Caco-2 (cell line): ENCODE measurements at regions of chr1 and their contacts with region 1.

Region 1: DNA sequence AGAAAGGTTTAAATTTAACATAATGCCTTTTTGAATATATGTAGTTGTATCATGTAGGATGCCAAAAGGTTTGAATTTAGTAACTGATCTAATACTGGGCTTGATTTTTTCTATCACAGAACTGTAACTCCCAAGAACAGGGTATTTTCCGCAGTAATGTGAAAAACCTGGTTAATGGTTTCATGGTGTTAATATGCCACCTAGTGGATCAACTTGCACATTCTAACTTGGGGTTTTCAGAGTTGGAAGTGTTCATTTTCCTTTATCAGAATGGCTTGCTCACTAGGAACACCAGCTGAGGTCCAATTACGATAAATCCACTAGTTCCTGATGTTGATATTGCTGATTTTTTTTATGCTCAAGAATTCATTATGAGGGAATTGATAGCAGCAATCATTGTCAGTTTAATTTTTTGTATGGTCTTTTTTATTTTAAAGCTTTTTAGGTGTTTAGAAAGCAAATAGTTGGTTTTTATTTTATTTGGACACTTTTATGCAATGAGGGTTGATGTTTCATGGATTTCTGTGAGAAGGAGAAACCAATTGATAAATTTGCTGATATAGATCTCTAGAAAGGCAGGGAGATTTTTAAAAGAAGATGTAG is 157.2 kb downstream of the PLA2G4A start:
- DNase-seq: peak in 1 of 2 experiments; percentile 53
- H3K4me3 ChIP-seq: no peak overlapping the region
- H3K4me3 Mint-ChIP-seq: no peak overlapping the region
- H3K27ac Mint-ChIP-seq: no peak overlapping the region
- H3K4me1 ChIP-seq: peaks cover 6% of the 10 kb centered on the region; the same call in 1 of the 2 replicates
- H3K4me1 Mint-ChIP-seq: no peaks in the 10 kb centered on the region
- H3K27me3 ChIP-seq: no peaks in the 10 kb centered on the region
- H3K27me3 Mint-ChIP-seq: no peaks in the 10 kb centered on the region
- CTCF ChIP-seq: peak; percentile 55 to 66

Region 2: DNA sequence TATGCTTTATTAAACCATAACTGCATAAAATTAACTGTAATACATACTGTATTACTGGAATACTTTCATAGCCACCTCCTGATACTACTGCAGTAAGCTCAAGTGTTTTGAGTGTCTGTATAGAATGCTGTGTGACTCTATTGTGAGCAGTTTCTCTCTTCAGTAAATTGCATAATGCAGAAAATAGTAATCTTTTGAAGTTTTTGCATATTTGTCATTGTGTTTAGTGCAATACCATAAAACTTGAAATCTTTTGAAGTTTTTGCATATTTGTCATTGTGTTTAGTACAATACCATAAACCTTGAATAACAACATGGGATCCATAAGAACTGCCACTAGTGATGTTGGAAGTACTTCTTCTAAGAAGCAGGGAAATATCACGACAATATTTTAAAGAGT is 622.1 kb before region 1 on chr1:
- CTCF ChIA-PET with region 1: no interaction called
- POLR2A ChIA-PET with region 1: no interaction called
- intact Hi-C with region 1: no loop called
- DNase-seq: no peak
- H3K4me3 ChIP-seq: no peak overlapping the region
- H3K4me3 Mint-ChIP-seq: no peak overlapping the region
- H3K27ac Mint-ChIP-seq: no peak overlapping the region
- H3K4me1 ChIP-seq: 0 out of 2 replicates have a peak, but pooled peaks cover 3% of the 10 kb centered on the region
- H3K4me1 Mint-ChIP-seq: peaks cover 17% of the 10 kb centered on the region
- H3K27me3 ChIP-seq: no peaks in the 10 kb centered on the region
- H3K27me3 Mint-ChIP-seq: no peaks in the 10 kb centered on the region
- CTCF ChIP-seq: no peak

Region 3: DNA sequence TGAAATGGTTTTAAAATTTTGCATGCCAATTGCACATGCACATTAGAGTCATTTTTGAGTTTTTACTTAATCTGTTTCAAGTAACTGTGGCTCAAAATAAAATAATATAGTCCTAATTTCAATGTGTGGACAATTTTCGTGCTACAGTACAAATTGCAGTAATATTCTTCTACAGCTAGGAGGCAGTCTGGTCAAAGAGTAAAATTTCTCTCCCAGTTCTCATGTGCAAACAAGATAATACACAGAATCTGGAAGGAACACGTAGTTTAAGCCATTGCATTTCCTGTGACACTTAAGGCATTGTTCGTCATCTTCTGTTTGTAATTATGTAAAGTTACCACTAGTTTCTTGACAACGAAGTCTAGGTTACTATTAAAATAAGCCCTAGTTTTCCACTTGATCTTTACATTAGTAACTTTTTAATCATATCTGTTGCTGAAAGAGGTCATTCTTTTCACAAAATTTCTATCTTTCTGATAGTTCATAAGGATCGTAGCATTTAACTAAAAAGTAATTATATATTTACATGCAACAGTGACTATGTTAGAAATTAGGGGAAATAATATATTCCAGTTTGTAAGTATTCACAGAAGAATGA is 581.4 kb before region 1 on chr1:
- CTCF ChIA-PET with region 1: no interaction called
- POLR2A ChIA-PET with region 1: no interaction called
- intact Hi-C with region 1: loop called (anchors 1 kb)
- DNase-seq: peak in 1 of 2 experiments; percentile 43
- H3K4me3 ChIP-seq: no peak overlapping the region
- H3K4me3 Mint-ChIP-seq: no peak overlapping the region
- H3K27ac Mint-ChIP-seq: no peak overlapping the region
- H3K4me1 ChIP-seq: no peaks in the 10 kb centered on the region
- H3K4me1 Mint-ChIP-seq: peaks cover 6% of the 10 kb centered on the region
- H3K27me3 ChIP-seq: no peaks in the 10 kb centered on the region
- H3K27me3 Mint-ChIP-seq: no peaks in the 10 kb centered on the region
- CTCF ChIP-seq: peak; percentile 58 to 63

Region 4: GRCh38 chr1:186482661-186483255 is 503.2 kb before region 1 on chr1:
- CTCF ChIA-PET with region 1: no interaction called
- POLR2A ChIA-PET with region 1: no interaction called
- intact Hi-C with region 1: loop called (anchors 1 kb)
- DNase-seq: peak; percentile 67 to 75
- H3K4me3 ChIP-seq: no peak overlapping the region
- H3K4me3 Mint-ChIP-seq: no peak overlapping the region
- H3K27ac Mint-ChIP-seq: no peak overlapping the region
- H3K4me1 ChIP-seq: peaks cover 53% of the 10 kb centered on the region
- H3K4me1 Mint-ChIP-seq: peaks cover 37% of the 10 kb centered on the region
- H3K27me3 ChIP-seq: no peaks in the 10 kb centered on the region
- H3K27me3 Mint-ChIP-seq: no peaks in the 10 kb centered on the region
- CTCF ChIP-seq: peak; percentile 88 to 94

Region 5: GRCh38 chr1:186680245-186681061 is 305.5 kb before region 1 on chr1 and contains the start of gene PTGS2:
- CTCF ChIA-PET with region 1: no interaction called
- POLR2A ChIA-PET with region 1: no interaction called
- intact Hi-C with region 1: loop called (anchors 1 kb)
- DNase-seq: peak; percentile 93 to 95
- H3K4me3 ChIP-seq: peak within 1 kb of the TSS; percentile 59
- H3K4me3 Mint-ChIP-seq: peak within 1 kb of the TSS; percentile 99
- H3K27ac Mint-ChIP-seq: peak within 1 kb of the TSS; percentile 99
- H3K4me1 ChIP-seq: no peaks in the 10 kb centered on the region
- H3K4me1 Mint-ChIP-seq: peaks cover 10% of the 10 kb centered on the region
- H3K27me3 ChIP-seq: no peaks in the 10 kb centered on the region
- H3K27me3 Mint-ChIP-seq: no peaks in the 10 kb centered on the region
- CTCF ChIP-seq: peak; percentile 36 to 46
- total RNA-seq, gene PTGS2: 18.4 and 24.2 TPM in 2 replicates

Region 6: DNA sequence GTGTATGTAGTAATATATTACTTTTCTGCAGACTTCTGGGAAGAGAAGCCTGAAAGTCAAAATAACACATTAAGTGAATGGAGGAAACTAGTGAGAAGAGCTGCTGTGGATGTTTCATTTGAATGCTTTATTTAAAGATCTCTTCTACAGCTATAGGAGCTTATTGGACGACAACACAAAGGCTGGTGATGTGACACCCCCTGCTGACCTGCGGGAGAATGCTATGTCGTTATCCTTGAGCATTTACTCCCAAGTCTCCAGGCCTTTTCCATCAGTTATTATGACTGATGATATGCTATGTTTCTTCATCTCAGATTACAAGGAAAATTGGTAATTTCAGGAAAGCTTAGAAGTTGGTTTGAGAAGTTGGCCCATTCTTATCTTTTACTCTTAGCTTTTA is 179.5 kb before region 1 on chr1:
- CTCF ChIA-PET with region 1: no interaction called
- POLR2A ChIA-PET with region 1: no interaction called
- intact Hi-C with region 1: loop called (anchors 1 kb)
- DNase-seq: peak; percentile 48 to 52
- H3K4me3 ChIP-seq: no peak overlapping the region
- H3K4me3 Mint-ChIP-seq: no peak overlapping the region
- H3K27ac Mint-ChIP-seq: no peak overlapping the region
- H3K4me1 ChIP-seq: no peaks in the 10 kb centered on the region
- H3K4me1 Mint-ChIP-seq: no peaks in the 10 kb centered on the region
- H3K27me3 ChIP-seq: no peaks in the 10 kb centered on the region
- H3K27me3 Mint-ChIP-seq: no peaks in the 10 kb centered on the region
- CTCF ChIP-seq: peak; percentile 61 to 64

Region 7: DNA sequence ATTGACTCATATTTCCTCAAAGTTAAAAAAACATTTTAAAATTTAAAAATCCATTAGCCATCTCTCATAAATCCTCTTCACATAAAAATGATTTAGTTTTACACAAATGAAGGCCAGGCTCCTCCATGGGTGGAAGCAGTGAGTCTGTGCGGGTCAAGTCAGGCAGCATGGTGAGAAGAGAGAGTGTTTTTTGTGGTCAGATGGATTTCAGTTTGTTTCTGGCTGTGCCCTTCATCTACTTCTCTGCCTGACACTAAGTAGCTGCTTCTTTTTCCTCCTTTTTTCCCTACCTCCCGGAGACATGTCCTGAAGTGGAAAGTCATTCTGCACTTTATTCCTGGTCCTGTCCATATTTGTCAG is 147.0 kb before region 1 on chr1:
- CTCF ChIA-PET with region 1: no interaction called
- POLR2A ChIA-PET with region 1: no interaction called
- intact Hi-C with region 1: no loop called
- DNase-seq: no peak
- H3K4me3 ChIP-seq: no peak overlapping the region
- H3K4me3 Mint-ChIP-seq: no peak overlapping the region
- H3K27ac Mint-ChIP-seq: no peak overlapping the region
- H3K4me1 ChIP-seq: peaks cover 6% of the 10 kb centered on the region; the same call in 1 of the 2 replicates
- H3K4me1 Mint-ChIP-seq: peaks cover 14% of the 10 kb centered on the region
- H3K27me3 ChIP-seq: no peaks in the 10 kb centered on the region
- H3K27me3 Mint-ChIP-seq: no peaks in the 10 kb centered on the region
- CTCF ChIP-seq: no peak

Region 8: GRCh38 chr1:186915555-186915954 is 70.4 kb before region 1 on chr1:
- CTCF ChIA-PET with region 1: interaction called, 3 read pairs
- POLR2A ChIA-PET with region 1: no interaction called
- intact Hi-C with region 1: loop called (anchors 1 kb)
- DNase-seq: no peak
- H3K4me3 ChIP-seq: no peak overlapping the region
- H3K4me3 Mint-ChIP-seq: no peak overlapping the region
- H3K27ac Mint-ChIP-seq: no peak overlapping the region
- H3K4me1 ChIP-seq: peaks cover 3% of the 10 kb centered on the region; the same call in 1 of the 2 replicates
- H3K4me1 Mint-ChIP-seq: no peaks in the 10 kb centered on the region
- H3K27me3 ChIP-seq: no peaks in the 10 kb centered on the region
- H3K27me3 Mint-ChIP-seq: no peaks in the 10 kb centered on the region
- CTCF ChIP-seq: no peak